ENCODE measurements at regions of chr6 and their contacts with region 1.

Region 1: DNA sequence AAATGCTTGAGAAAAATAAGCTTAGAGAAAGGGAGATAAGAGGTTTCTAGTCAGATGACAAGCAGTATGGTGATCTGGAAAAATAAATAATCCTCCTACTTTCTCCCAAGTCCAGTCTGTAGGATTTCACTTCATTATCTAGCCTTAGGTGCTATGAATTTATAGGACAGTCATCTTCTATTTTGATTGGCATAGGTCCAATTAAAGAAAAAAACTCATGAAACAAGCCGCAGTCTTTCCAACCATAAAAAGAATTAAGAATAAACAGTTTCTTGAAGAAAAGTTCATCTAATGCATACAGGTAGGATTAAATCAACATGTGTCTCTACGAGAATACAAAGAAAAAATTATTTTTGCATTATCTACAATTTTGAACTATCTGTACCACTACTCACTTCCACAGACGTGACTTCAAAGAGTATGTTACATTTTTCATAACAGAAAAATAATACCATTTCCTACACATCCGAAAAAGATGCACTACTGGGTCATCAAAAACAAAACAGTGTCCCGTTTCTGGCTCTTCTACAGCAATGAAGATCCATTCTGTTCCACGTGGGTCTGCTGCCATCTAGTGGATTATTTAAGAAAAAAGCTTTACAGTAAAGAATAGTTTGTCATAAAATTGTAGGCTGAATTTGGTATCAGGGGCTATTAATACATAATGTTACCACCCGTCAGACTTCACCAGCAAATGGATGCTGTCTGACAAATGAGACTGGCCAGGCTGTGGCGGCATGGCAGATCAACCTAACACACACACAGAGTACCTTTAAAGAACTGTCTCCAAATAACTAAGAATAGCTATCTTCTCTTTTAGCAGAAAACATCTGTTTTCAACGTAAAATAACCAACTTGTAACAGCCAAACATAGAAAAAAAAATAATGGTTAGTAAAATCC is 28.9 kb downstream of the STX7 start:
- DNase-seq: peak; percentile 20 to 53
- H3K4me3 ChIP-seq: no peak overlapping the region
- H3K27ac ChIP-seq: no peak overlapping the region
- H3K4me1 ChIP-seq: no peaks in the 10 kb centered on the region
- H3K27me3 ChIP-seq: no peaks in the 10 kb centered on the region
- CTCF ChIP-seq: peak; percentile 96

Region 2: GRCh38 chr6:131858765-131859415 is 625.1 kb before region 1 on chr6:
- CTCF ChIA-PET with region 1: no interaction called
- POLR2A ChIA-PET with region 1: no interaction called
- intact Hi-C with region 1: no loop called
- DNase-seq: no peak
- H3K4me3 ChIP-seq: no peak overlapping the region
- H3K27ac ChIP-seq: no peak overlapping the region
- H3K4me1 ChIP-seq: peaks cover 18% of the 10 kb centered on the region
- H3K27me3 ChIP-seq: no peaks in the 10 kb centered on the region
- CTCF ChIP-seq: no peak

Region 3: GRCh38 chr6:132279592-132280139 is 204.4 kb before region 1 on chr6:
- CTCF ChIA-PET with region 1: interaction called, 19 read pairs
- POLR2A ChIA-PET with region 1: no interaction called
- intact Hi-C with region 1: loop called (anchors 1 kb)
- DNase-seq: peak; percentile 55 to 67
- H3K4me3 ChIP-seq: peak overlapping the region; percentile 56
- H3K27ac ChIP-seq: no peak overlapping the region
- H3K4me1 ChIP-seq: 0 out of 2 replicates have a peak, but pooled peaks cover 3% of the 10 kb centered on the region
- H3K27me3 ChIP-seq: no peaks in the 10 kb centered on the region
- CTCF ChIP-seq: peak; percentile 100

Region 4: DNA sequence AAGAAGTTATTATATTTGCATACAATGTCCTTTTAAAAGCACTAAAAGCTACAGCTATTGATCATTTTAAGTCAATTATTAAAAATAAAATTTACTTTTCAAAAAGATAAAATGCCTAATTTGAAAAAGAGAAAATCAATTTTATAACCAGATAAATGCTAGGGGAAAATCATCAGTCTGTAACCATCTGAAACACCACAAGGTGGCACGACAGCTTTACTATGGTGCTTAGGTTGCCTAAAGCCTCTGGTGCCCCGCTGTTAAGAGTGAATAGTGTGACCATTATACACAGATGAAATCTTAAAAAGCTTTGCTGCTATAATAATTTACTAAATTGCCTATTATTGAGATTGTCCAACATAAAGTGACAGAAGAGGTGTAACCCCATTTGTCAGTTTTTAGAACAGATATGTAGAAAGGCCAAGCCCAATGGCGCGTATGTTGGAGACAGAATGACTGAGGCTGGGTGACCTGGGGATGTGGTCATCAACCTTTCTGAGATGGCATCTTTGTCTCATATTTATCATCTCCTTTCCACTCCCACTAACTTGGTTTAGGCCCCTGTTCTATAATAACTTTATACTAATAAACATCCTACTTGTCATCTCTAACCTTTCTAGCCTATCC is 183.6 kb before region 1 on chr6:
- CTCF ChIA-PET with region 1: interaction called, 5 read pairs
- POLR2A ChIA-PET with region 1: no interaction called
- intact Hi-C with region 1: loop called (anchors 1 kb)
- DNase-seq: peak; percentile 18 to 44
- H3K4me3 ChIP-seq: no peak overlapping the region
- H3K27ac ChIP-seq: no peak overlapping the region
- H3K4me1 ChIP-seq: no peaks in the 10 kb centered on the region
- H3K27me3 ChIP-seq: no peaks in the 10 kb centered on the region
- CTCF ChIP-seq: peak; percentile 90

Region 5: DNA sequence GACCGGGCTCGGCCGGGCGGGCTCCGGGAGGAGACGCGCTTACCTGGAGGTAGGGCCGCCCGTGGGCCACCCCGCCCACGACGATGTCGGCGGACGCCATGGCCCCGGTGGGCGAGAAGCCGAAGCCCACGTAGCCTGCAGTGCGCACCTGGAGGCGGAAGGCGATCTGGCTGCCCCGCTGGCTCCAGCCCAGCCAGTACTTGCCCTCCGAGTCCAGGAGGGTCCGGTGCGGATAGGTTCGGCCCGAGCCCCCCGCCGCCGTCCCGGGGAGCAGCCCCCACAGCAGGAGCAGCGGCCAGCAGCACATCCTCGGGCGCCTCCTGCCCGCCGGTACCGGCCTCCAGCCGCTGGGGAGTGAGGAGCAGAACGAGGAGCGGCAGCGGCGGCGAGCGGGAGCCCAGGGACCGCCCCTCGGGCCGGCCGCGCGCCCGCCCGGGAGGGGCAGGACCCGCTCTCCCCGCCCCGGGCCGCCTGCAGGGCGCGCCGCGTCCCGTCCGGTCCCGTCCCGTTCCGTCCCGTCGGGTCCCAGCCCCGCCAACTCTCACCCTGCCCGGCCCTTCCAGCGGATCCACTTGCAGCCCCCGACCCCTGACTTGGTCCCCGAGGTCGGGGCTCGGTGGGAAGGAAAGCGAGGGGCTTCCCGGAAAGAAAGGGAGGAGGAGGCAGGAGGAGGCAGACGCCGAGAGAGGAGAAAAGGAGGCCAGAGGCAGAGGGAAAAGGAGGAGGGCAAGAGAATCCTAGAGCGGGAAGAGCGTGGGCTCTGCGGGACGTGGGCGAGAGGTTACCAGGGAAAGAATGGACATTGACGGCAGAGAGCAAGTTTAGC is 82.7 kb before region 1 on chr6 and contains the start of gene MOXD1:
- CTCF ChIA-PET with region 1: no interaction called
- POLR2A ChIA-PET with region 1: no interaction called
- intact Hi-C with region 1: loop called (anchors 5 kb)
- DNase-seq: peak in 1 of 2 experiments; percentile 56
- H3K4me3 ChIP-seq: peak within 1 kb of the TSS; percentile 49; the same call in 1 of the 2 replicates
- H3K27ac ChIP-seq: no peak within 1 kb of the TSS
- H3K4me1 ChIP-seq: peaks cover 16% of the 10 kb centered on the region
- H3K27me3 ChIP-seq: no peaks in the 10 kb centered on the region
- CTCF ChIP-seq: no peak
- total RNA-seq, gene MOXD1: 1.0 and 1.3 TPM in 2 replicates

Region 6: GRCh38 chr6:132465530-132466485 is 18.2 kb before region 1 on chr6:
- CTCF ChIA-PET with region 1: interaction called, 4 read pairs
- POLR2A ChIA-PET with region 1: interaction called, 10 read pairs
- intact Hi-C with region 1: no loop called
- DNase-seq: no peak
- H3K4me3 ChIP-seq: no peak overlapping the region
- H3K27ac ChIP-seq: peak overlapping the region; percentile 75
- H3K4me1 ChIP-seq: peaks cover 28% of the 10 kb centered on the region
- H3K27me3 ChIP-seq: no peaks in the 10 kb centered on the region
- CTCF ChIP-seq: no peak

Region 7: DNA sequence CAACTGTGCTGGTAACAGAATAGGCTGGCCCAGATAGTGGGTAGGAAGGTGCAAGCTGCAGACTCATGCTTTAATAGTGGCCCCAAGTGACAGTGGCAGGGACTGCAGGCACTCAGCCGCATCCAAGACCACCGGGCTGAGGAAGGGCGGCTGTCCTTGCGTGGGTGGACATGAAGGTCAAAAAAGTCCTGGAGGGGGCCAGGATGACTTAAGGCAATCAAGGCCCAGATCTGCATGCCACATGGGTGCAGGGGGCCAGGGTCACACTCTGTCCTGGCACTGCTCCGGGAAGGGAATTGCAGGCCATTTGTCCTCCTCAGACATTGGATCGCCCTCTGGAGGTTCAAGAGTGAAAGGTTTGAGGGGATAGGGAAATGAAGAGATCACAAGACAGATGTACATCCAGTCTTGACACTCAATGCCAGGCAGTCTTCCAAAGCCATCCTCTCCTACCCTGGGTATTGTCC is 284.1 kb after region 1 on chr6:
- CTCF ChIA-PET with region 1: interaction called, 15 read pairs
- POLR2A ChIA-PET with region 1: no interaction called
- intact Hi-C with region 1: no loop called
- DNase-seq: peak in 1 of 2 experiments; percentile 15
- H3K4me3 ChIP-seq: no peak overlapping the region
- H3K27ac ChIP-seq: no peak overlapping the region
- H3K4me1 ChIP-seq: peaks cover 17% of the 10 kb centered on the region
- H3K27me3 ChIP-seq: no peaks in the 10 kb centered on the region
- CTCF ChIP-seq: peak; percentile 71

Measured in PC-9 (cell line).